CD4-positive, alpha-beta memory T cell (primary cell): ENCODE measurements at regions of chr9 and their contacts with region 1.

Region 1: GRCh38 chr9:127916665-127917613 is at the start of gene ST6GALNAC4:
- DNase-seq: peak; percentile 90 to 93 (median 91)
- H3K4me3 ChIP-seq: peak within 1 kb of the TSS; percentile 66 to 76
- H3K4me3 Mint-ChIP-seq: peak within 1 kb of the TSS; percentile 78 to 88 (median 84)
- H3K27ac ChIP-seq: peak within 1 kb of the TSS; percentile 52
- H3K27ac Mint-ChIP-seq: peak within 1 kb of the TSS; percentile 63 to 84 (median 79)
- H3K4me1 ChIP-seq: peaks cover 38% of the 10 kb centered on the region
- H3K4me1 Mint-ChIP-seq: peaks cover 12 to 65% (median 39%) of the 10 kb centered on the region in 4 donors
- H3K27me3 ChIP-seq: no peaks in the 10 kb centered on the region
- H3K27me3 Mint-ChIP-seq: no peaks in the 10 kb centered on the region
- total RNA-seq, gene ST6GALNAC4: 35.7 to 38.1 TPM

Region 2: GRCh38 chr9:127214421-127215267 is 702.3 kb before region 1 on chr9:
- CTCF ChIA-PET with region 1: interaction called, 12 read pairs
- POLR2A ChIA-PET with region 1: no interaction called
- intact Hi-C with region 1: loop called (anchors 5 kb)
- DNase-seq: peak; percentile 51 to 71 (median 55)
- H3K4me3 ChIP-seq: no peak overlapping the region
- H3K4me3 Mint-ChIP-seq: no peak overlapping the region
- H3K27ac ChIP-seq: no peak overlapping the region
- H3K27ac Mint-ChIP-seq: peak overlapping the region in 1 of 7 donors; percentile 20
- H3K4me1 ChIP-seq: no peaks in the 10 kb centered on the region
- H3K4me1 Mint-ChIP-seq: peaks cover 0 to 6% (median 2%) of the 10 kb centered on the region in 4 donors
- H3K27me3 ChIP-seq: no peaks in the 10 kb centered on the region
- H3K27me3 Mint-ChIP-seq: peaks cover 0 to 1% of the 10 kb centered on the region in 2 donors

Region 3: DNA sequence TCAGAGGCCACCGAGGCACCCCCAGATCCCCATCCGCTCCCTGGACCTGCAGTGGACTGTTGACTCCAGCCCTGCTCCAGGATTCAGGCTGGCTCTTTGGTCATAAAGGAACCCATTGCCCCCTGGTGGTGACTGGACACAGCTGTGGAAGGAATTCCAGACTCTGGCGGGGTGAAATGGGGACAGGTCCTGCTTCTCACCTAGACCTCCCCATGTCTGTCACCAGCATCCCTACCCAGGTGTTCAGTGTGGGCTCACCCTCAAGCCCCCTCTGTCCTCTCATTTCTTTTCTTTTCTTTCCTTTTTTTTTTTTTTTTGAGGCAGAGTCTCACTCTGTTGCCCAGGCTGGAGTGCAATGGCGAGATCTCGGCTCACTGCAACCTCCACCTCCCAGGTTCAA is 330.4 kb before region 1 on chr9:
- CTCF ChIA-PET with region 1: interaction called, 64 read pairs
- POLR2A ChIA-PET with region 1: no interaction called
- intact Hi-C with region 1: loop called (anchors 1 kb)
- DNase-seq: peak; percentile 53 to 56 (median 56)
- H3K4me3 ChIP-seq: no peak overlapping the region
- H3K4me3 Mint-ChIP-seq: no peak overlapping the region
- H3K27ac ChIP-seq: no peak overlapping the region
- H3K27ac Mint-ChIP-seq: peak overlapping the region in 1 of 7 donors; percentile 76
- H3K4me1 ChIP-seq: no peaks in the 10 kb centered on the region
- H3K4me1 Mint-ChIP-seq: peaks cover 0 to 3% (median 2%) of the 10 kb centered on the region in 4 donors
- H3K27me3 ChIP-seq: no peaks in the 10 kb centered on the region
- H3K27me3 Mint-ChIP-seq: peaks cover 3 to 5% of the 10 kb centered on the region in 2 donors

Region 4: GRCh38 chr9:127802576-127803443 is 114.1 kb before region 1 on chr9 and contains the start of gene FPGS:
- CTCF ChIA-PET with region 1: interaction called, 9 read pairs
- POLR2A ChIA-PET with region 1: interaction called, 3 read pairs
- intact Hi-C with region 1: loop called (anchors 2 kb)
- DNase-seq: peak; percentile 84 to 88 (median 87)
- H3K4me3 ChIP-seq: peak within 1 kb of the TSS; percentile 80 to 94
- H3K4me3 Mint-ChIP-seq: peak within 1 kb of the TSS; percentile 89 to 94 (median 92)
- H3K27ac ChIP-seq: peak within 1 kb of the TSS; percentile 72
- H3K27ac Mint-ChIP-seq: peak within 1 kb of the TSS; percentile 88 to 96 (median 93)
- H3K4me1 ChIP-seq: peaks cover 25% of the 10 kb centered on the region
- H3K4me1 Mint-ChIP-seq: peaks cover 4 to 38% (median 23%) of the 10 kb centered on the region in 4 donors
- H3K27me3 ChIP-seq: no peaks in the 10 kb centered on the region
- H3K27me3 Mint-ChIP-seq: no peaks in the 10 kb centered on the region
- total RNA-seq, gene FPGS: 100 to 101 TPM

Region 5: DNA sequence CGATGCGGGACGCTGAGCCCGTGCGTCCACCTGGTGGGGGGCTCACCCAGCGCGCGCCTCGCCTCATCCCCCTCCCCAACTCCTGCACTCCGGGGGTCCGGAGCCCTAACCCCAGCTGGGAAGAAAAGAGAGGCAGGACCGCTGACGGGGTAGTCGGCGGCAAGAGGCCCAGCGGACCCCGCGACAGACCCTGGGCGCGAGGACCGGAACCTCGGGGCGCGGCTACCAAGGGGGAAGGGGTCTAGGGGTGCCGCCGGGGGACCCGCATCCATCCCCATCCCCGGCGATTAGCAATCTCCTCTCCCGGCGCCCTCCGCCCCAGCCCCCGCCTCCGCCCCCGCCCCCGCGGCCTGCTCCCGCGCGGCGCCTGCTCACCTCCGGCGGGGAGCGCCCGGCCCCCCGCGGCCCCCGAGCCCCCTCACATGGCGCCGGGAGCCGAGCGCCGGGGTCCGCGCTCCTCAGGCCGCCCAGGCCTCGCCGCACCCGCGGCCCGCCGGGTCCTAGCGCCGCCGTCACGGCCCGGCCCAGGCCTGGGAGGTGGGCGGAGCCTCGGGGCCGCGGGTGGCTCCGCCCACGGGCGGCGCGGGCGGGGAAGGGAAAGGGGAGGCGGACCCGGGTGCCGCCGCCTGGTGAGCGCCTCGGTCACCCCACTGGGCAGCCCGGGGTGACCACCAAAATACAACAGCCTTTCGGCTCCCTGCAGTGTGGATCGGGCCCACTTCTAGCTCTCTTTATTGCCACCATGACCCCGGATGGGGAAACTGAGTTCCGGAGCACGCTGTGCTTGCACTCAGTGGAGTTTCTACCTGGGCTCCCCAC is 17.6 kb before region 1 on chr9 and contains the start of gene ST6GALNAC6:
- CTCF ChIA-PET with region 1: interaction called, 10 read pairs
- POLR2A ChIA-PET with region 1: interaction called, 87 read pairs
- intact Hi-C with region 1: loop called (anchors 2 kb)
- DNase-seq: peak; percentile 61 to 74 (median 63)
- H3K4me3 ChIP-seq: peak within 1 kb of the TSS; percentile 68 to 79
- H3K4me3 Mint-ChIP-seq: peak within 1 kb of the TSS; percentile 87 to 92 (median 90)
- H3K27ac ChIP-seq: peak within 1 kb of the TSS; percentile 60
- H3K27ac Mint-ChIP-seq: peak within 1 kb of the TSS; percentile 47 to 91 (median 88)
- H3K4me1 ChIP-seq: peaks cover 58% of the 10 kb centered on the region
- H3K4me1 Mint-ChIP-seq: peaks cover 12 to 59% (median 37%) of the 10 kb centered on the region in 4 donors
- H3K27me3 ChIP-seq: no peaks in the 10 kb centered on the region
- H3K27me3 Mint-ChIP-seq: no peaks in the 10 kb centered on the region
- total RNA-seq, gene ST6GALNAC6: 125 to 127 TPM

Region 6: DNA sequence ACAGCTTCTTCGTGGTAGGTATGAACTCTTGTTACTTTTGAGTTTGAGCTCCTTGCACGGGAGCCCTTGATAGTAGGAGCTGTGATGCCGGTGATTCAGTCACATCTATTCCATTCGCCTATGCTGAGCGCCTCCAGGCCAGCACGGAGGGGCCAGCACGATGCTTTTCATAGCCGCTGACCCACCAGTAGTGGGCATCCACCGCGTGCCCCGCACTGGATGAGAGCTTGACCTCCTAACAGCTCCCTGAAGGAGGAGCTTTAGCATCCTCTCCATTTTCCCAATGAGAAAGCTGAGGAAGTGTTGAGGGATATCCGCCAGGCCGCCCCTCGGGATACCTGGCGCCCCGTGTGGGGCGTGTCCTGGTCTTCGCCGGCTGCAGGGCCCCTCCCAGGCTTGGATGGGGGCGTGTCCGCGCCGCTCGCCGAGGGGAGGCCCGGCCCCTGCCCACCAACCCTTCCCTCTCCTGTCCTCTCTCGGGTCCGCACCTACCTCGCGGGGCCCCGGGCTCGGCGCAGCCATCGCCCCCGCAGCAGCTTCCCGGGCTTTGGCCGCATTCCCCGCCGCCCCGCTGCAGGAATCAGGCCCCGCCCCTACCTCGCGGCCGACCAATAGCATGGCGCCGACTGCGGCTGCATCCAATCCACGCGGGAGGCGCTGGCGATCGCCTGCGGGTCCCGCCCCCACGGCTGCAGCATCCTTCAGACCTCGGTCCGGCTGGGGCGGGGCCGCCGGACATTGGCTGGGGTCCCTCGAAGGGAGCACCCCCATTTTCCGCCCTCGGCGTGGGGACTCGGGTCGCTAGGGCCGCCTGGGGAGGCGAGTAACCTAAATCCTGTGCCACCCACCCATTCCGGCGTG is 13.5 kb after region 1 on chr9 and contains the start of gene PIP5KL1:
- CTCF ChIA-PET with region 1: interaction called, 11 read pairs
- POLR2A ChIA-PET with region 1: interaction called, 6 read pairs
- intact Hi-C with region 1: loop called (anchors 1 kb)
- DNase-seq: peak; percentile 67 to 73 (median 70)
- H3K4me3 ChIP-seq: peak within 1 kb of the TSS; percentile 6 to 54
- H3K4me3 Mint-ChIP-seq: peak within 1 kb of the TSS; percentile 65 to 85 (median 76)
- H3K27ac ChIP-seq: no peak within 1 kb of the TSS
- H3K27ac Mint-ChIP-seq: peak within 1 kb of the TSS; percentile 25 to 93 (median 64)
- H3K4me1 ChIP-seq: peaks cover 63% of the 10 kb centered on the region
- H3K4me1 Mint-ChIP-seq: peaks cover 16 to 49% (median 35%) of the 10 kb centered on the region in 4 donors
- H3K27me3 ChIP-seq: no peaks in the 10 kb centered on the region
- H3K27me3 Mint-ChIP-seq: no peaks in the 10 kb centered on the region
- total RNA-seq, gene PIP5KL1: 0.72 to 1.8 TPM